CD4-positive, alpha-beta T cell (primary cell): ENCODE measurements at regions of chr2 and their contacts with region 1.

Region 1: GRCh38 chr2:37414470-37414949 is 70.1 kb downstream of the QPCT start:
- DNase-seq: peak in 3 of 14 experiments; percentile 68 to 73 (median 71)
- ATAC-seq: peak; percentile 68
- H3K4me3 ChIP-seq: no peak overlapping the region
- H3K4me3 Mint-ChIP-seq: no peak overlapping the region
- H3K27ac ChIP-seq: no peak overlapping the region
- H3K27ac Mint-ChIP-seq: no peak overlapping the region
- H3K4me1 ChIP-seq: peaks cover 7% of the 10 kb centered on the region
- H3K4me1 Mint-ChIP-seq: peaks cover 13% of the 10 kb centered on the region
- H3K27me3 ChIP-seq: no peaks in the 10 kb centered on the region
- H3K27me3 Mint-ChIP-seq: no peaks in the 10 kb centered on the region
- CTCF ChIP-seq: peak; percentile 84

Region 2: DNA sequence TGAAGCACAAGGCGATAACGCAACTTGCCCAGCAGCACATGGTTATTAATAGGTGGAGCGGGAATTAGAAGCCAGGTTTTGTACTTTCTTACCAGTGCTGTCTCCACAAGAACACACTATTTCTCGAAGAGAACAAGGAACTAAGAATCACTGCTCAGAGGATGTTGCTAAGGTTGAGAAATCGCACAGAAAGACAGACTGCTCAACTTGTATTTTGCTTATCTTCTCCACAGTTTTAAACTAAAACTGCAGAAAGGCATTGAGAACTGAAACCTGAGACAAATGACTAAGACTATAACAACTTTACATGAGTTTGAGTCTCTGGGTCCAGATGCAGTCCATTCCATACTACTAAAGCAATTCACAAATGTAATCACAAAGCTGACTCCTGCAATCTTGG is 96.1 kb before region 1 on chr2:
- CTCF ChIA-PET with region 1: no interaction called
- POLR2A ChIA-PET with region 1: no interaction called
- intact Hi-C with region 1: no loop called
- DNase-seq: no peak
- ATAC-seq: no peak
- H3K4me3 ChIP-seq: no peak overlapping the region
- H3K4me3 Mint-ChIP-seq: no peak overlapping the region
- H3K27ac ChIP-seq: no peak overlapping the region
- H3K27ac Mint-ChIP-seq: no peak overlapping the region
- H3K4me1 ChIP-seq: peaks cover 13% of the 10 kb centered on the region
- H3K4me1 Mint-ChIP-seq: peaks cover 70% of the 10 kb centered on the region
- H3K27me3 ChIP-seq: no peaks in the 10 kb centered on the region
- H3K27me3 Mint-ChIP-seq: no peaks in the 10 kb centered on the region
- CTCF ChIP-seq: no peak

Region 3: GRCh38 chr2:37537316-37537715 is 122.8 kb after region 1 on chr2:
- CTCF ChIA-PET with region 1: interaction called, 3 read pairs
- POLR2A ChIA-PET with region 1: interaction called, 5 read pairs
- intact Hi-C with region 1: loop called in 1 of 2 experiments (anchors 5 kb)
- DNase-seq: no peak
- ATAC-seq: no peak
- H3K4me3 ChIP-seq: no peak overlapping the region
- H3K4me3 Mint-ChIP-seq: no peak overlapping the region
- H3K27ac ChIP-seq: no peak overlapping the region
- H3K27ac Mint-ChIP-seq: no peak overlapping the region
- H3K4me1 ChIP-seq: no peaks in the 10 kb centered on the region
- H3K4me1 Mint-ChIP-seq: peaks cover 10% of the 10 kb centered on the region
- H3K27me3 ChIP-seq: no peaks in the 10 kb centered on the region
- H3K27me3 Mint-ChIP-seq: no peaks in the 10 kb centered on the region
- CTCF ChIP-seq: no peak

Region 4: DNA sequence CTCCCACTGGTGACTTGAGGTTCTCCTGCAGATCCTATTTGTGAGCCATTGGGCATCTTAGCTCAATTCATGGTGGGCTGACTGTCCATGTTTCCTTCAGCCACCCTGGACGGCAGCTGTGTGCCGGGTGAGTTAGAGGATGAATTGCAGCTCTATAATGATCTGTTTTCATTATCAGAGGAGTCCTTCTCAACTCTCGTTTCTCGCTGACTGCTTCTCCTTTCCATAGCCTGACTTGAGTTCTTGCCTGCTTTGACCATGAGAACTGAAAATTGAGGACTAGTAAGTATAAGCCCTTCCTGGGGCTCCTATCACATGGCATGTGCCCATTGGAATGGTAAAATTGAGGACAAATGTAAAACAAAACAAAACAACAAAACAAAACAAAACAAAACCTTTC is 135.1 kb after region 1 on chr2:
- CTCF ChIA-PET with region 1: interaction called, 4 read pairs
- POLR2A ChIA-PET with region 1: interaction called, 3 read pairs
- intact Hi-C with region 1: loop called in 1 of 2 experiments (anchors 5 kb)
- DNase-seq: no peak
- ATAC-seq: no peak
- H3K4me3 ChIP-seq: no peak overlapping the region
- H3K4me3 Mint-ChIP-seq: no peak overlapping the region
- H3K27ac ChIP-seq: no peak overlapping the region
- H3K27ac Mint-ChIP-seq: no peak overlapping the region
- H3K4me1 ChIP-seq: peaks cover 13% of the 10 kb centered on the region
- H3K4me1 Mint-ChIP-seq: peaks cover 11% of the 10 kb centered on the region
- H3K27me3 ChIP-seq: no peaks in the 10 kb centered on the region
- H3K27me3 Mint-ChIP-seq: no peaks in the 10 kb centered on the region
- CTCF ChIP-seq: no peak

Region 5: GRCh38 chr2:37635504-37636380 is 221.2 kb after region 1 on chr2:
- CTCF ChIA-PET with region 1: no interaction called
- POLR2A ChIA-PET with region 1: no interaction called
- intact Hi-C with region 1: loop called in 1 of 2 experiments (anchors 1 kb)
- DNase-seq: peak; percentile 24 to 93 (median 53)
- ATAC-seq: peak; percentile 89
- H3K4me3 ChIP-seq: no peak overlapping the region
- H3K4me3 Mint-ChIP-seq: peak overlapping the region; percentile 8
- H3K27ac ChIP-seq: peak overlapping the region; percentile 70 to 75
- H3K27ac Mint-ChIP-seq: peak overlapping the region; percentile 88
- H3K4me1 ChIP-seq: peaks cover 47% of the 10 kb centered on the region
- H3K4me1 Mint-ChIP-seq: peaks cover 76% of the 10 kb centered on the region
- H3K27me3 ChIP-seq: no peaks in the 10 kb centered on the region
- H3K27me3 Mint-ChIP-seq: no peaks in the 10 kb centered on the region
- CTCF ChIP-seq: no peak

Region 6: GRCh38 chr2:37877457-37878315 is 463.2 kb after region 1 on chr2:
- CTCF ChIA-PET with region 1: interaction called, 7 read pairs
- POLR2A ChIA-PET with region 1: interaction called, 6 read pairs
- intact Hi-C with region 1: loop called (anchors 1 to 5 kb)
- DNase-seq: peak in 5 of 14 experiments; percentile 26 to 78 (median 71)
- ATAC-seq: peak; percentile 70
- H3K4me3 ChIP-seq: no peak overlapping the region
- H3K4me3 Mint-ChIP-seq: no peak overlapping the region
- H3K27ac ChIP-seq: no peak overlapping the region
- H3K27ac Mint-ChIP-seq: no peak overlapping the region
- H3K4me1 ChIP-seq: no peaks in the 10 kb centered on the region
- H3K4me1 Mint-ChIP-seq: no peaks in the 10 kb centered on the region
- H3K27me3 ChIP-seq: peaks cover 0 to 4% of the 10 kb centered on the region in 2 experiments
- H3K27me3 Mint-ChIP-seq: peaks cover 15% of the 10 kb centered on the region
- CTCF ChIP-seq: peak; percentile 90